HEK293 (cell line): ENCODE measurements at regions of chr18 and their contacts with region 1.

Region 1: DNA sequence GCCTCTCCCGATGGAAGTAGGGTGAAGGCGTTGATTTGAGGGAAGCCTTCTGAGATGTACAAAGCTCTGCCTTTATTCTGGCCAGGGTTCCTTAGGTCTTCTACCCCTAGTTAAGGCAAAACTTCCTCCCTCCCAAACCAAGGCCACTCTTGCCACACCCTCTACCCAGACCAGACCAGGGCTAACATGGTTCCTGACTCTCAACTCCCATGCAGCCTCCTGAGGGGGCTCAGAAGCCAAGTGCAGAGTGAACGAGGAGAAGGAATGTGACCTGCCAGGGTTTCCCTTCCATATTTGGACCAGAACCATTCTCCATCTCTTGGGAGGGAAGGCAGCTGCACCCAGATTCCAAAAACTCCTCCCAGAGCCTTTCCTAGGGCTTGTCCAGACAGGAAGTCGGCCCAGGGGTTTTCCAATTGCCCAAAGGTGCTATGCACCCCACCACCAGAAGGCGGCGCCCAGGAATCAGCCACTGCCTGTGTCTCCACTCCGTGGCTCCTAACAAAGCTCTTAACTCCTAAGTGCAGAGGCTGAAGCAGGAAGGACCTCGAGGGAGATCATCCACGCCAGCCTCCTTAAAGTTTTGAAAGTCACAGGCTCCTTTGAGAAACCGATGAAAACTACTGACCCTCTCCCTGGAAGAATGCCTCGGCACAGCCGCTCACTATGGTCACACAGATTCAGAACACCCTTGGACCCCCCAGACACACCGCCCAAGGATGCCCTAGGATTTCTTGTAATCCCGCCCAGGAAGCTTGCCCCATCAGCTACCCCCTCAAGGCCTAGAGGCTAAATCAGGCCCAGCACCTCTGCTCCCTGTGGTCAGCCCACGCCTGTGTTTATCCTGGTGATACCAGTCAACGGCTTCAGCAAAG is 157.8 kb downstream of the SMAD2 start:
- H3K4me3 ChIP-seq: no peak overlapping the region
- H3K27ac ChIP-seq: no peak overlapping the region
- H3K4me1 ChIP-seq: no peaks in the 10 kb centered on the region
- CTCF ChIP-seq: peak; percentile 52; the same call in 1 of the 2 replicates

Region 2: DNA sequence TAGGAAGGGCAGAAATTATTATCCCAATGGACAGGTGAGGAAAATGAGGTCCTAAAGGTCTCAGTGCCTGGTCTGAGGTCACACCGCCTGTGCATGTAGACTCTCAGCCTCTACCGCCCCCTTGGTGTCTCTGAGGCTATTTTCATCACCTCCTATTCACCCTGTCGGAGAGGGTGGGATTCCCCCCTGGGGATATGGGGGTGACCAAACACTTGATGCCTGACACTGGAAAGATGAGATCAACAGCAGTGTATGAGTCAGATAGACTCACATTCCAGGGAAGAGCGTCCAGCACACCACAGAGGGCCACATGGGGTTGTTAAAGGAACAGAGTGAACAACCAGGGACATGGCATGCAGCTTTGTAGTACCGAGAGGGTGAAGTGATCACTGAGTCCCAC is 41.8 kb before region 1 on chr18:
- CTCF ChIA-PET with region 1: no interaction called
- POLR2A ChIA-PET with region 1: no interaction called
- H3K4me3 ChIP-seq: no peak overlapping the region
- H3K27ac ChIP-seq: no peak overlapping the region
- H3K4me1 ChIP-seq: no peaks in the 10 kb centered on the region
- CTCF ChIP-seq: no peak

Region 3: DNA sequence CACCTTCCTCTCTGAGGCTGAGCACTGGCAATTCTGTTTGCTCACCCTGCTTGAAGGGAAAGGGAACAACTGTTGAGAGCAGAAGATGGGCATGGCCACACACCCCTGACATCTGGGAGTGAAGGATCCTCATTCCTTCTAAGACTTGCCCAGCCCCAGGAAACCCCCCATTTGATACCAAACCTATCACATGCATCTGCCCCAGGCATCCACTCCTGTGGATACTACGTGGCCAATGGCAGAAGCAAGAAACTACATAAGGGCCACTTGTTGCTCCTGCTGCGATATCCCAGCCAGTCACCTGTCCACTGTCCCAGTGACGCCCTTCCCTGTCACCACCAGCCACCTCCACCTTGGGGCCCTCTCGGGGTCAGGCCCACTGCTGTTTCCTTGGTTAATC is 27.4 kb before region 1 on chr18:
- CTCF ChIA-PET with region 1: no interaction called
- POLR2A ChIA-PET with region 1: no interaction called
- H3K4me3 ChIP-seq: no peak overlapping the region
- H3K27ac ChIP-seq: no peak overlapping the region
- H3K4me1 ChIP-seq: no peaks in the 10 kb centered on the region
- CTCF ChIP-seq: no peak

Region 4: DNA sequence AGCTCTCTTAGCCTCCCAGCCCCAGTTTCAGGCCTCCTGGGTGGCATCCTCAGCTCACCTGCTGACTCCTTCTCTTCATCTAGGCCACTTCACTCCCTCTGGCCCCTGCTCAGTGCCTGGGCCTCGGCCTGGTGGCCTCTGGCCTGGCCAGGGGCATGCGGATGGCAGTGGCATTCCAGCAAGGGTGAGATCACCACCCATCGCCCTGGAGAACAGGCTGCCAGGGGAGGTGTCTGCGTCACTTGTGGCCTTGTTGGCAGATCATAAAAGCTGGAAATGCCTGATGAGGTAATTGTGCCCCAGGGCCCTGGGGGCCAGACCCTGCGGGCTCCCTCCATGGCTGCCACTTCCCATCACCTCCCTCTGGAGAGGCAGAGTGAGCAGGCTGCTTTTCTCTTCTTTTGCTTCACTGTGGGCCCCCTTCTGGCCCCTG is 230.3 kb after region 1 on chr18:
- CTCF ChIA-PET with region 1: interaction called, 37 read pairs
- POLR2A ChIA-PET with region 1: no interaction called
- H3K4me3 ChIP-seq: no peak overlapping the region
- H3K27ac ChIP-seq: no peak overlapping the region
- H3K4me1 ChIP-seq: peaks cover 6% of the 10 kb centered on the region
- CTCF ChIP-seq: no peak

Region 5: DNA sequence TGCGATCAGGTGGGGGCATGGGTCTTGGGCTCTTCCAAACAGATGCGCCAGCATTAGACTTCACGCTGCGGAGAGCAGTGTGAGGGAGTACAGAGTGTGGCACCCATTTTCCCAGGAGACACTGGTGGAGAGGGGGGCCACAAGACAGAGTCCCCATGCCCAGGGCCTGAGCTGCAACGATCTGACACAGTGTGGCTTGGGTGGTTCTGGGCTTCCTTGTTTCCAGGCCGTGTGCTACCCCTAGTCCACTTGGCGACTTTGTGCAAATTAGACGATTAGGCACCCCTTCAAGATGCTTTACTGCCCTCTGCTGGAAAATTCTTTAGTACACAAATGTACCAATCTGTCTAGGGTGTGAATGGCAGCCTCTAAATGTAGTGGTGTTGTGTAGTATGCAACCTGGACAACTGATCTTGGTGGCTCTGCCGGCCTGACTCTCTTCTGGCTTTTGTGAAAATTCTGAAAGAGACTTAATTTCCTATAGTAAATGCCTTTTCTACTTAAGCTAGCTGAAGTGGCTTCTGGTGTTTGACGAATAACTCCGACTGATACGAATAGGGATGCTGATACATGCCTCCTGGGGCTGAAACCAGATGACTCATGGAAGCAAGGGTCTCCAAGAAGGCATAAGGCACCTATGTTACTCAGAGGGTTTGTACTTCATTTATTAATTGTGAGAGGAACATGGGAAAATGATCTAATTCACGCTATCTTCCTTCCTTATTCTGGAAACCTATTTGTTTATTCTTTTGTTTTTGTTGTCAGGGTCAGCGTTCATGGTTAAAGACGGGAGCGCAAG is 250.1 kb after region 1 on chr18:
- CTCF ChIA-PET with region 1: interaction called, 30 read pairs
- POLR2A ChIA-PET with region 1: no interaction called
- H3K4me3 ChIP-seq: no peak overlapping the region
- H3K27ac ChIP-seq: 0 out of 2 replicates have a peak overlapping the region, but pooled peaks have one; percentile 4
- H3K4me1 ChIP-seq: peaks cover 8% of the 10 kb centered on the region; the same call in 1 of the 2 replicates
- CTCF ChIP-seq: peak; percentile 68; the same call in 1 of the 2 replicates